ENCODE measurements at regions of chr20 and their contacts with region 1.

Region 1: DNA sequence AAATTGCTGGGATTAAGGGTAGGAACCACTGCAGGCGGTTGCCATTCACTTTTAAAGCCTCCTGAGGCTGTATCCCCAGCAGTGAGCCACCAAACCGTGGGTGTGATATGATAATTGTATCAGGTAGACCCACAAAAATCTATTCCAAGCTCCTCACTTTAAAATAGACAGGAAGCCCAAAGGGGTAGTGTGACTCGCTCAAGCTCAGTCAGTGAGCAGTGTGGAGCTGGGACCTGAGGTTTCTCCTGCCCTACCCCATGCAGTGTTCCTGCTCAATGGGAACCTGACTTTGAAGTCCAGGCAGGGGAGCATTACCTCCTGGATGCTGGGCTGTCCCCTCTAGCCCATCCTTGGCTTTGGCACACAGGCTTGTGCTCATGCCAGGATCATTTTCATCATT is 14.9 kb upstream of the MAPRE1 start:
- DNase-seq: no peak
- H3K4me3 ChIP-seq: no peak overlapping the region
- H3K27ac ChIP-seq: no peak overlapping the region
- H3K4me1 ChIP-seq: no peaks in the 10 kb centered on the region
- H3K27me3 ChIP-seq: no peaks in the 10 kb centered on the region
- CTCF ChIP-seq: no peak
- POLR2A ChIP-seq: no peak

Region 2: DNA sequence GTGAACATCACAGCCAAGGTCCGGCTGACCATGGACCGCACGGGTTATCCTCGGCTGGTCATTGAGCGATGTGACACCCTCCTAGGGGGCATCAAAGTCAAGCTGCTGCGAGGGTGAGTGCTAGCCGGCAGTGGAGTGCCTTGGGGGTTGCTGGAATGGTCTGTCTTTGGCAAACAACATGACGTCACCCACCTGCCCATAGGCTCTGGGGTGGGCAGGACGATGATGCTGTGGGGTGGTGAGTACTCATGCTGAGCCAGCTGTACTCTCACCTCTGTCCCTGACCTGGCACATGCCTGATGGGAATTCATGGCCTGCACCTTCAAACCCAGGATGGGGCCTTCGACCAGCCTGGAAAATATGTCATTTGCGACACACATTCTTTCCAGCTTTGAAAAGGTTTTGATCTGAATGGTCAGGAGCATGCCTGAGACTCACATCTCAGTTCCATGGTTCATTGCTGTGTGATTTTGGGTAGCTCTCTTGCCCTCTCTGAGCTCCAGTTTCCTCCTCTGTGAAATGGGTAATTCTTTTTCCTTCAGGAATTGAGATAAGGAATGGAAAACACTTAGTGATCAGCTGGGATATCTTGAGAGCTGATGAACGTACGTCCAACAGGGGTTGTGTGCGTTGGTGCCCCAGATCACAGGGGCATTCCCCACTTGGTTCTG is 281.4 kb after region 1 on chr20:
- intact Hi-C with region 1: loop called (anchors 5 kb)
- DNase-seq: no peak
- H3K4me3 ChIP-seq: no peak overlapping the region
- H3K27ac ChIP-seq: no peak overlapping the region
- H3K4me1 ChIP-seq: no peaks in the 10 kb centered on the region
- H3K27me3 ChIP-seq: no peaks in the 10 kb centered on the region
- CTCF ChIP-seq: no peak
- POLR2A ChIP-seq: no peak